CD4-positive, alpha-beta memory T cell (primary cell): ENCODE measurements at regions of chr1 and their contacts with region 1.

Region 1: DNA sequence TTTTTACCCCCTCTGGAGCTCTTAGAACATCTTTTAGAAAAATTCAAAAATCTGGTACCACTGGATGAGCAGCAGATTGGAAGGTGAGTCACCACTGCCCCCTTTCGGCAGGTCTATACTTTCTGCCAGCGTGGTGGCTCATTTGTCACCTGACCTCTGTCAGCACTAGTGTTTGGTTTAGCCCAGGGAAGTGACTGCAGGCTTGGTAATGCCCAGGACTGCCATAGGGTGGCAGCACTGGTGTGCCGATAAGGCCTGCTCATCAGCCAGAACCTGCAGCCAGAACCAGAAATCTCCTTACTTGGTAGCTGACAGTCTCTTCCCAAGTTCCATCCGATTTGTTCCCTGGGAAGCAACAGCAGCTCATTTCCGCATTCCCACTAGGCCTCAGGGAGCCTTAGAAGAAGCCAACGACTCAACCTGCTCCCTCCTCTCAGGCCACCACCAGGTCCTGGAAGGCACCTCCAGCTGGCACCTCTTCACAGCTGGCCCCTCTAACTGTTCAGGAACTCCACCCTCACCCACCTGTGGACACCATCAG is 6.8 kb downstream of the SMIM12 start:
- DNase-seq: peak; percentile 87 to 95 (median 90)
- H3K4me3 ChIP-seq: no peak overlapping the region
- H3K4me3 Mint-ChIP-seq: no peak overlapping the region
- H3K27ac ChIP-seq: peak overlapping the region; percentile 10
- H3K27ac Mint-ChIP-seq: peak overlapping the region in 6 of 7 donors; percentile 57 to 90 (median 72)
- H3K4me1 ChIP-seq: peaks cover 9% of the 10 kb centered on the region
- H3K4me1 Mint-ChIP-seq: peaks cover 24 to 42% (median 27%) of the 10 kb centered on the region in 4 donors
- H3K27me3 ChIP-seq: no peaks in the 10 kb centered on the region
- H3K27me3 Mint-ChIP-seq: no peaks in the 10 kb centered on the region

Region 2: DNA sequence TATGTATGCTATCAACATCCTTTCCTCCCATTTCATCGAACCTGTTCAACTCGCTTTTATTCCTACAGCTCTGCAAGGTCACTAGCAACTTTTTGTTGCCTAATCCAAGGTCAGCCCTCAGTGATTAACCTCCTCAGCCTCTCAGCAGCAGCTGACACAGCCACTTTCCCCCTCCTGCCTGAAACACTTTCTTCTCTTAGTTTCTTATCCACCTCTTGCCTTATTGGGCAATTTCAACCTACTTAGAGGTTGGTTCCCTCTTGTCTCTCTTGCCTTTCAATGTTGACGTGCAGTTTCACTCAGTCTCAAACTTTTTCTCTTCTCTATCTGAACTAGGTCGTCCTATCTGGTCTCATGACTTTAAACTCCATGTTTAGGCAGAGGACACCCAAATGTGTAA is 519.8 kb before region 1 on chr1:
- CTCF ChIA-PET with region 1: no interaction called
- POLR2A ChIA-PET with region 1: no interaction called
- intact Hi-C with region 1: no loop called
- DNase-seq: no peak
- H3K4me3 ChIP-seq: no peak overlapping the region
- H3K4me3 Mint-ChIP-seq: no peak overlapping the region
- H3K27ac ChIP-seq: no peak overlapping the region
- H3K27ac Mint-ChIP-seq: no peak overlapping the region
- H3K4me1 ChIP-seq: no peaks in the 10 kb centered on the region
- H3K4me1 Mint-ChIP-seq: no peaks in the 10 kb centered on the region
- H3K27me3 ChIP-seq: no peaks in the 10 kb centered on the region
- H3K27me3 Mint-ChIP-seq: peaks cover 2 to 4% of the 10 kb centered on the region in 2 donors

Region 3: DNA sequence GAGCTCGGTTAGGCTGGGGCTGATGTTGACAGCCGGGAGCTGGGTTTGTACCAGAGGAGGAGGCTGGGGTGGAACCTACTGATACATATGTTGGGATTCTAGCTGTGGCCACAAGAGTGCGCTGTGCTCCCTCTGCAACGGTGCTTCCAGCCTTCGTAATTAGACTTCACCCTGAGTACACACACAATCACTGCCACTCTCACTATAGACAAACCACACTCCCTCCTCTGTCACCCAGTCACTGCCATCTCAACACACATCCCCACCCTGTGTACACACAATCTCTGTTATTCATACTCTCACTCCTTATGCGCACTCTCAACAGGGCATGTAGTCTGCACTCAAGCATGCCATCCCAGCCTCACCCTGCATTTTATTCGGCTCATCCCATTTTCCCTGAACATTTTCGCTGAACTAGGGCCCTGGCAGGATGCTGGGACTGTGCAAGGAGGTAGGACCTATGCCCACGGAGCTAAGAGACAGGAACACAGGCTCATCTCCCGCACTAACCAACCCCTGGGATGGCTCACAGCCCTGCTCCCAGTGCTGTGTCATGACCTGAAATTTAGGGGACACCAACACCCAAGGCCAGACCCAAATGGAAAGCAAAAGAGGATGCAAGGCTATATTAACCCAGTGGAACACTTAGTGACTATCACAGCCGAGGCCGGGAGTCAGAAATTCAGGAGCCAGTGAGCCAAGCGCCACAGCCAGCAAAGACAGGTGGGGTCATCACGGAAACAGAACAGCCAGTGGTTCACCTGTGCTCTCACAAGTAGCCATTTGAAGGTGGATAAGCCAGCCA is 66.0 kb before region 1 on chr1:
- CTCF ChIA-PET with region 1: interaction called, 6 read pairs
- POLR2A ChIA-PET with region 1: no interaction called
- intact Hi-C with region 1: loop called (anchors 1 kb)
- DNase-seq: peak; percentile 41 to 58 (median 45)
- H3K4me3 ChIP-seq: no peak overlapping the region
- H3K4me3 Mint-ChIP-seq: no peak overlapping the region
- H3K27ac ChIP-seq: no peak overlapping the region
- H3K27ac Mint-ChIP-seq: peak overlapping the region in 2 of 7 donors; percentile 1 to 34
- H3K4me1 ChIP-seq: peaks cover 3% of the 10 kb centered on the region
- H3K4me1 Mint-ChIP-seq: peaks cover 0 to 6% (median 3%) of the 10 kb centered on the region in 4 donors
- H3K27me3 ChIP-seq: peaks cover 6% of the 10 kb centered on the region
- H3K27me3 Mint-ChIP-seq: peaks cover 14 to 52% of the 10 kb centered on the region in 2 donors

Region 4: GRCh38 chr1:34806396-34806795 is 46.4 kb before region 1 on chr1:
- CTCF ChIA-PET with region 1: no interaction called
- POLR2A ChIA-PET with region 1: no interaction called
- intact Hi-C with region 1: no loop called
- DNase-seq: no peak
- H3K4me3 ChIP-seq: no peak overlapping the region
- H3K4me3 Mint-ChIP-seq: no peak overlapping the region
- H3K27ac ChIP-seq: no peak overlapping the region
- H3K27ac Mint-ChIP-seq: no peak overlapping the region
- H3K4me1 ChIP-seq: no peaks in the 10 kb centered on the region
- H3K4me1 Mint-ChIP-seq: peaks cover 0 to 5% (median 2%) of the 10 kb centered on the region in 4 donors
- H3K27me3 ChIP-seq: no peaks in the 10 kb centered on the region
- H3K27me3 Mint-ChIP-seq: peaks cover 0 to 3% of the 10 kb centered on the region in 2 donors

Region 5: GRCh38 chr1:34865981-34866761 is 13.4 kb after region 1 on chr1:
- CTCF ChIA-PET with region 1: interaction called, 57 read pairs
- POLR2A ChIA-PET with region 1: interaction called, 25 read pairs
- intact Hi-C with region 1: loop called (anchors 1 kb)
- DNase-seq: peak; percentile 85 to 92 (median 91)
- H3K4me3 ChIP-seq: peak overlapping the region; percentile 61 to 69
- H3K4me3 Mint-ChIP-seq: peak overlapping the region; percentile 85 to 92 (median 88)
- H3K27ac ChIP-seq: peak overlapping the region; percentile 74
- H3K27ac Mint-ChIP-seq: peak overlapping the region; percentile 86 to 95 (median 92)
- H3K4me1 ChIP-seq: peaks cover 36% of the 10 kb centered on the region
- H3K4me1 Mint-ChIP-seq: peaks cover 20 to 56% (median 34%) of the 10 kb centered on the region in 4 donors
- H3K27me3 ChIP-seq: no peaks in the 10 kb centered on the region
- H3K27me3 Mint-ChIP-seq: peaks cover 1 to 3% of the 10 kb centered on the region in 2 donors

Region 6: DNA sequence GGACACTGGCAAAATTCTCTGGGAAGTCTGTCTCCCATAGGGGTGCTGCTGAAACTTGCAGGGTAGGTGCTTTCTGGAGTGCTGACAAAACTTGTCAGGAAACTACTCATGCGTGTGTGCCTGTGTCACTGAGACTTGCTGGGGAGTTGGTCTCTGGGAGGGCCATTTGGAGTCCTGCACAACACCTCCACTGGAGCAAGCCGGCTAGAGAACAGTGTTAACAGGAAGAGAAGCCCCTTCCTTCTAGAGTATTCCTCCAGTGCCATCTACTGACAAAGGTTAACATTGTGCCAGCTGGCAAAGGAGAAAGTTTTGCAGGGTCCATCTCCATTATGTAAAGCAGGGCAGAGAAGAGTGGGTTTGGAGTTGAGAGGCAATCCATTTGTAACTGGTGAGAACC is 445.7 kb after region 1 on chr1:
- CTCF ChIA-PET with region 1: no interaction called
- POLR2A ChIA-PET with region 1: no interaction called
- intact Hi-C with region 1: loop called (anchors 1 kb)
- DNase-seq: peak; percentile 42 to 51 (median 44)
- H3K4me3 ChIP-seq: no peak overlapping the region
- H3K4me3 Mint-ChIP-seq: no peak overlapping the region
- H3K27ac ChIP-seq: no peak overlapping the region
- H3K27ac Mint-ChIP-seq: peak overlapping the region in 3 of 7 donors; percentile 29 to 86 (median 30)
- H3K4me1 ChIP-seq: no peaks in the 10 kb centered on the region
- H3K4me1 Mint-ChIP-seq: peaks cover 0 to 12% (median 7%) of the 10 kb centered on the region in 4 donors
- H3K27me3 ChIP-seq: no peaks in the 10 kb centered on the region
- H3K27me3 Mint-ChIP-seq: no peaks in the 10 kb centered on the region

Region 7: GRCh38 chr1:35499652-35500176 is 647.0 kb after region 1 on chr1:
- CTCF ChIA-PET with region 1: no interaction called
- POLR2A ChIA-PET with region 1: no interaction called
- intact Hi-C with region 1: no loop called
- DNase-seq: peak; percentile 50 to 84 (median 66)
- H3K4me3 ChIP-seq: no peak overlapping the region
- H3K4me3 Mint-ChIP-seq: peak overlapping the region in 6 of 8 donors; percentile 42 to 71 (median 46)
- H3K27ac ChIP-seq: peak overlapping the region; percentile 50
- H3K27ac Mint-ChIP-seq: peak overlapping the region; percentile 81 to 98 (median 94)
- H3K4me1 ChIP-seq: peaks cover 43% of the 10 kb centered on the region
- H3K4me1 Mint-ChIP-seq: peaks cover 42 to 56% (median 52%) of the 10 kb centered on the region in 4 donors
- H3K27me3 ChIP-seq: no peaks in the 10 kb centered on the region
- H3K27me3 Mint-ChIP-seq: no peaks in the 10 kb centered on the region